BJ (cell line): ENCODE measurements at regions of chr12 and their contacts with region 1.

Region 1: DNA sequence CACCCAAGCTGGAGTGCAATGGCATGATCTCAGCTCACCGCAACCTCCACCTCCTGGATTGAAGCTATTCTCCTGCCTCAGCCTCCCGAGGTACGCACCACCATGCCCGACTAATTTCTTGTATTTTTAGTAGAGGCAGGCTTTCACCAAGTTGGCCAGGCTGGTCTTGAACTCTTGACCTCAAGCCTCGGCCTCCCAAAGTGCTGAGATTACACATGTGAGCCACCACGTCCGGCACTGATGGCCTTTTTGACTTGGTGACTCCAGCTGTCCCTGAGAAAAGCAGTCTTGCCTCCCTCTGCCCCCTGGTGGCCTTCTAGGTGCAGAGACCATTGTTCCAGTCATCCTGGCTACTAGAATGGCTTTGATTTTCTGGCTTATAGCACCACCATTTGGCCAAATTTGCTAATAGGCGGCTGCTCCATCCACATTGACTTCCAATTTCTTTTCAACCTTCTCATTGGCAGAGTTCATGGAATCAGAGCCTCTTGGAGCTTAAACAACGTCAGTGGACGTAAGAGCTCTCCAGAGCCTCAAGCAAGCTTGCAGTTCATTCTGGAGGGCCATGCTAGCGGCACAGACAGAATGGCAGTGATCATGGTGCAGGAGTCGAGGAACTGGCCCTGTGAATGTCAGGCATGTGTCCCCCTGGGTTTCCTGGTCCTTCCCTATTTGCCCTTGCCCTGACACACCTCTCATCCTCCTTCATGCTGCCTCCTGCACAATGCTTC is 25.4 kb upstream of the EIF4B start:
- DNase-seq: peak; percentile 51
- H3K4me3 ChIP-seq: no peak overlapping the region
- H3K27me3 ChIP-seq: no peaks in the 10 kb centered on the region
- CTCF ChIP-seq: peak; percentile 95

Region 2: GRCh38 chr12:52720437-52720836 is 260.4 kb before region 1 on chr12:
- CTCF ChIA-PET with region 1: no interaction called
- POLR2A ChIA-PET with region 1: no interaction called
- DNase-seq: no peak
- H3K4me3 ChIP-seq: no peak overlapping the region
- H3K27me3 ChIP-seq: peaks cover 17% of the 10 kb centered on the region
- CTCF ChIP-seq: no peak

Region 3: DNA sequence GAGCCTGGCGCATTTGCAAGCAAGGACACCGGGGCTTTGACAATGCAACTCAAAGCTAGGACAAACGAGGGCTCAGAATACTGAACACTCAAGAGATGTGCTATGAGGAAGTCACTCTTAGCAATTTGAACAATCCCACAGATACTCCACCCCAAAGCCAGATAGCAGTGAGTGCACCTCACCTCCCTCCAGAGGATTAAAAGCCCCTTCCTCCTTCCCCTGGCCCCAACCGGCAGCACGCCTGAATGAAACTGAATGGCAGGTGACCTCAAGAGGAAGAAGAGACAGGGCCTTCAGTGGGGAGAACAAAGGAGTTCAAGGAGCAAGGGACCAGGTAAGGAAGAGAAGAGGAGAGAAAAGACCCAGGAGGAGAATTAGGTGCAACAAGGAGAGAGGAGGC is 130.2 kb before region 1 on chr12:
- CTCF ChIA-PET with region 1: no interaction called
- POLR2A ChIA-PET with region 1: no interaction called
- DNase-seq: no peak
- H3K4me3 ChIP-seq: no peak overlapping the region
- H3K27me3 ChIP-seq: peaks cover 10% of the 10 kb centered on the region
- CTCF ChIP-seq: no peak

Region 4: DNA sequence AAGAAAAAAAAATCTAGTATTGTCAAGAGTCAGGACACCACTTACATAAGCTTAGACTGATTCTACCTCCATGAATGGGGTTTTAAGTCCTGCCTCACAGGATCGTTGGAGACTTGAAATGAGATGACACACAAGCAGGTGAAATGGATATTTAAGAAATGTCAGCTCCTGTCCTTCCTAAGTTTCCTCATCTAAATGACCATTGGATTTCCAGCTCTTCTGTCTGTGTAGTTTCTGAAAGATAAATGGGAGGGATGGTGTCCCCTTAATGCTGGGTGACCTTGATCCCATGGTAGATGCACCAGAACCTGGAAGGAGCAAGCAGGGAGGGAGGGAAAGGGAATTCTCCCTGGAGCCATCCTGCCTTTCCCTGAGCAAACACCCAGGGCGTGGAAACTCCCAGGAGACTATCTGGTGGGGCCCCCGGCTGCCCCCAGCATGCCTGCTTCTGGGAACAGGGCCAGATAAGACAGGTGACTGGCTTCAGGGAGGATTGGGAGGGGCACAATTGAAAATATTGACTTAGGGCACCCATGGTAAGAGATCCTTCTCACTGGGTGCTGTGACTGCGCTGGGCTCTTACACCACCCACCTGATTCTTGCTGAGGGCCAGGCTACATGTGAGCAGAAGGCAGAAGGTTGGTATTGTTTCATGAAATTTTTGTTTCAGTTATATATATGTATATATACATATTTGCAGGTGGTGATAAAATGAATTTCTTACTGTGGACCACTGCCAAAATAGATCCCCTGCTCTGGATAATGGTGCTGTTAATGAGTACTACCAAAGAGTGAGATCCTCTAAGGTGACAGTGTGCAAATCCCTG is 85.6 kb before region 1 on chr12:
- CTCF ChIA-PET with region 1: interaction called, 722 read pairs
- POLR2A ChIA-PET with region 1: interaction called, 6 read pairs
- DNase-seq: no peak
- H3K4me3 ChIP-seq: no peak overlapping the region
- H3K27me3 ChIP-seq: no peaks in the 10 kb centered on the region
- CTCF ChIP-seq: no peak

Region 5: GRCh38 chr12:52910248-52910883 is 70.5 kb before region 1 on chr12:
- CTCF ChIA-PET with region 1: interaction called, 23 read pairs
- POLR2A ChIA-PET with region 1: no interaction called
- DNase-seq: no peak
- H3K4me3 ChIP-seq: no peak overlapping the region
- H3K27me3 ChIP-seq: no peaks in the 10 kb centered on the region; the same call in 1 of the 2 replicates
- CTCF ChIP-seq: no peak

Region 6: GRCh38 chr12:52949413-52950331 is 31.2 kb before region 1 on chr12:
- CTCF ChIA-PET with region 1: interaction called, 19 read pairs
- POLR2A ChIA-PET with region 1: no interaction called
- DNase-seq: peak; percentile 73
- H3K4me3 ChIP-seq: peak overlapping the region; percentile 75
- H3K27me3 ChIP-seq: no peaks in the 10 kb centered on the region
- CTCF ChIP-seq: no peak

Region 7: GRCh38 chr12:52992699-52993557 is 12.1 kb after region 1 on chr12:
- CTCF ChIA-PET with region 1: interaction called, 26 read pairs
- POLR2A ChIA-PET with region 1: no interaction called
- DNase-seq: no peak
- H3K4me3 ChIP-seq: no peak overlapping the region
- H3K27me3 ChIP-seq: no peaks in the 10 kb centered on the region
- CTCF ChIP-seq: no peak

Region 8: DNA sequence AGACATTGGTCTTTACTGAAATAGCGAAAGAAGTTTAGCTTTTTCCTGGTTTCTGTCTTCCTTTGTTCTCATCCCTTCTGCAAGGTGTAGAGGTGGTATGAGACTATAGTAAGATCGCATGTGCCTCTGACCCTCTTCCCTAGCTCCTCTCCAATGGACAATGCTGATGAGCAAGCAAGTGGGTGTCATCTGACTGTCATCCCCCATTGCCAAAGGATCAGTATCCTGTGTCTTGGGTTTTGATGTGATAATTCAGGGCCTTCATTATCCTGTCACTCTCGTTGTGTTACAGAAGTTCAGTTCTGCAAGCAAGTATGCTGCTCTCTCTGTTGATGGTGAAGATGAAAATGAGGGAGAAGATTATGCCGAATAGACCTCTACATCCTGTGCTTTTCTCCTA is 59.0 kb after region 1 on chr12:
- CTCF ChIA-PET with region 1: no interaction called
- POLR2A ChIA-PET with region 1: no interaction called
- DNase-seq: no peak
- H3K4me3 ChIP-seq: no peak overlapping the region
- H3K27me3 ChIP-seq: no peaks in the 10 kb centered on the region
- CTCF ChIP-seq: no peak